CD8-positive, alpha-beta T cell (primary cell): ENCODE measurements at regions of chr1 and their contacts with region 1.

Region 1: DNA sequence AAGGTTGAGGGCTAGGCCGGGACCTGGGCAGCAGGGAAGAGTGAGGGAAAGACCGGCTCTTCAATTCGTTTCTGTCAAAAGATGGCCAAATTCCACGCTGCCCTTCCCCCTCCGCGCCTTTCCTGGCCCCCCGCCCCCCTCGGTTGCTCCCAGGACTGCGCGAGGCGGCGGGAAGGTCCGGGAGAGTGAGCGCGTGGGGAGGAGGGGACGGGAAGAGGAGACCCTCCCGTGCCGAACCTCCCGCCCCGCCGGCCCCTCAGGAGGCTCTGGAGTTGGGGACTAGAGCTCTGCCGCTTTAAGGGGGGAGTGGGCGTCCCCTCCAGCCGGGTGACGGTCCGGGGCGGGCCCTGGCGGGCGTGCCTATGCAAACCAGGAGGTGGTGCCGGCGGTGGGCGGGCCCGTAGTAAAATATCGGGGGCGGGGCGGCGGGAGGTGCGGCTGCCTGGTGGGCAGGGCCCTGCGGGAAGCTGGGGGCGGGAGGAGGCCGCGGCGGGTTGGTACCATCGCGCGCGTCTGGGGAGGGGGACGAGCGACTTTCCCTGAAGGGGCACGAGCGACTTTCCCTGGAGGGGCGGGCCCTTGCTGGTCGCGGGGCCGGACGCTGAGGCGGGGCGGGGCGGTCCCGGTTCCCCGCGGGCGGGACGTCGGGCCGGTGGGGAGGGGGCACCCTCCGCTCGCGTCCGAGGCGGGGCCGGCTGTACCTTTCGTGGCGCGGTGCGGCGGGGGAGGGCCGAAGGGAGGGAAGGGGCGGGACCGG is 58.2 kb downstream of the BCL9 start:
- DNase-seq: peak; percentile 94 to 98 (median 96)
- ATAC-seq: peak; percentile 84
- H3K4me3 ChIP-seq: peak overlapping the region; percentile 75 to 77
- H3K4me3 Mint-ChIP-seq: peak overlapping the region; percentile 88
- H3K27ac ChIP-seq: peak overlapping the region; percentile 24 to 52
- H3K27ac Mint-ChIP-seq: peak overlapping the region; percentile 72
- H3K4me1 ChIP-seq: peaks cover 15% of the 10 kb centered on the region
- H3K4me1 Mint-ChIP-seq: peaks cover 27% of the 10 kb centered on the region
- H3K27me3 ChIP-seq: no peaks in the 10 kb centered on the region
- H3K27me3 Mint-ChIP-seq: no peaks in the 10 kb centered on the region
- CTCF ChIP-seq: no peak

Region 2: GRCh38 chr1:147109041-147109440 is 490.5 kb before region 1 on chr1:
- CTCF ChIA-PET with region 1: no interaction called
- POLR2A ChIA-PET with region 1: no interaction called
- intact Hi-C with region 1: no loop called
- DNase-seq: no peak
- ATAC-seq: no peak
- H3K4me3 ChIP-seq: no peak overlapping the region
- H3K4me3 Mint-ChIP-seq: no peak overlapping the region
- H3K27ac ChIP-seq: no peak overlapping the region
- H3K27ac Mint-ChIP-seq: no peak overlapping the region
- H3K4me1 ChIP-seq: no peaks in the 10 kb centered on the region
- H3K4me1 Mint-ChIP-seq: no peaks in the 10 kb centered on the region
- H3K27me3 ChIP-seq: peaks cover 0 to 4% of the 10 kb centered on the region in 2 experiments
- H3K27me3 Mint-ChIP-seq: peaks cover 16% of the 10 kb centered on the region
- CTCF ChIP-seq: no peak

Region 3: DNA sequence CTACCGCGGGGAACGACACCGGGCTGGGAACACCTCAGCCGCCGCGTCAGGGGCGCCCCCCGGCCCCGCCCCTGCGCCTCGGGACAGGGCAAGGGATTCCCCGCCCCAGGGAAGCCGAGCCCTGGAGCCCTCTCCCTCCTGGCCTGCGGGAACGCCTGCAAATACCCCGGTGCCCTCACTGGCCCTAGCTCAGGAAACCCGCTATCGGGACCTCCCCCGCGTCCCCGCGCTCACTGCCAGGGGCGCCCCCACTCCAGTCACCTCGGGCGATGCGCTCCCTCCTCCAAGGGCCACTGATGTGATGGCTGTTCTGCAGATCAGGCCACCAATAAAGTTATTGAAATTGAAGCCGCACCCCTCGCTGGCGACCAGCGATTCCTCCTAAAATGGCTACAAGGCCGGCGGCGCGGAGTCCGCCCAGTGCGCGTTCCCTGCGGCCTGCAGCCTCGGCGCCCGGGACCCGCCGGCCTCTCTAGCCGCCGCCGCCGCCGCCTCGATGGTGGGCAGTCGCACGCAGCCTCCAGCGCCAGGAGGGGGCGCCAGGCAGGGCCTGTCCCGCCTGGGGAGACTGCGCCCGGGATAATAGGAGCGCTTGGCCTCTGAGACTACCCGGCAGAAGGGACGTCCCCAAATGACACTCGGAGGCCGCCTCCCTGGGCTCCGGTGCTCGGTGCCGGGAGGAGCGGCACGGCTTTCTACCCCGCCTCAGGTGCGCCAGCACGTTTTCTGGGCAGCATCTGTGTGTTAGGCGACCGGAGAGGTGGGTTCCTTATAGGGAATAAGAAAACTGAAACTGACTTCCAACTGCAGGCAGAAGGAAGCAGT is 427.2 kb before region 1 on chr1 and contains the start of gene PRKAB2:
- CTCF ChIA-PET with region 1: no interaction called
- POLR2A ChIA-PET with region 1: no interaction called
- intact Hi-C with region 1: loop called in 1 of 2 experiments (anchors 5 kb)
- DNase-seq: peak; percentile 74 to 94 (median 88)
- ATAC-seq: peak; percentile 79
- H3K4me3 ChIP-seq: peak within 1 kb of the TSS; percentile 85 to 96
- H3K4me3 Mint-ChIP-seq: peak within 1 kb of the TSS; percentile 96
- H3K27ac ChIP-seq: peak within 1 kb of the TSS; percentile 57 to 85
- H3K27ac Mint-ChIP-seq: peak within 1 kb of the TSS; percentile 95
- H3K4me1 ChIP-seq: peaks cover 16% of the 10 kb centered on the region
- H3K4me1 Mint-ChIP-seq: peaks cover 49% of the 10 kb centered on the region
- H3K27me3 ChIP-seq: no peaks in the 10 kb centered on the region
- H3K27me3 Mint-ChIP-seq: no peaks in the 10 kb centered on the region
- CTCF ChIP-seq: peak; percentile 83
- total RNA-seq, gene PRKAB2: 5.2 to 5.8 TPM

Region 4: GRCh38 chr1:147515046-147515869 is 84.3 kb before region 1 on chr1:
- CTCF ChIA-PET with region 1: interaction called, 10 read pairs
- POLR2A ChIA-PET with region 1: no interaction called
- intact Hi-C with region 1: loop called in 1 of 2 experiments (anchors 2 kb)
- DNase-seq: peak in 2 of 9 experiments; percentile 47 to 60
- ATAC-seq: peak; percentile 65
- H3K4me3 ChIP-seq: no peak overlapping the region
- H3K4me3 Mint-ChIP-seq: no peak overlapping the region
- H3K27ac ChIP-seq: no peak overlapping the region
- H3K27ac Mint-ChIP-seq: no peak overlapping the region
- H3K4me1 ChIP-seq: no peaks in the 10 kb centered on the region
- H3K4me1 Mint-ChIP-seq: peaks cover 4% of the 10 kb centered on the region
- H3K27me3 ChIP-seq: no peaks in the 10 kb centered on the region
- H3K27me3 Mint-ChIP-seq: peaks cover 9% of the 10 kb centered on the region
- CTCF ChIP-seq: peak; percentile 33

Region 5: GRCh38 chr1:147579532-147579931 is 20.0 kb before region 1 on chr1:
- CTCF ChIA-PET with region 1: interaction called, 4 read pairs
- POLR2A ChIA-PET with region 1: interaction called, 5 read pairs
- intact Hi-C with region 1: loop called in 1 of 2 experiments (anchors 2 kb)
- DNase-seq: peak in 1 of 9 experiments; percentile 11
- ATAC-seq: peak; percentile 62
- H3K4me3 ChIP-seq: no peak overlapping the region
- H3K4me3 Mint-ChIP-seq: peak overlapping the region; percentile 20
- H3K27ac ChIP-seq: no peak overlapping the region
- H3K27ac Mint-ChIP-seq: peak overlapping the region; percentile 12
- H3K4me1 ChIP-seq: peaks cover 24% of the 10 kb centered on the region
- H3K4me1 Mint-ChIP-seq: peaks cover 26% of the 10 kb centered on the region
- H3K27me3 ChIP-seq: peaks cover 7 to 20% of the 10 kb centered on the region in 2 experiments
- H3K27me3 Mint-ChIP-seq: peaks cover 43% of the 10 kb centered on the region
- CTCF ChIP-seq: no peak

Region 6: DNA sequence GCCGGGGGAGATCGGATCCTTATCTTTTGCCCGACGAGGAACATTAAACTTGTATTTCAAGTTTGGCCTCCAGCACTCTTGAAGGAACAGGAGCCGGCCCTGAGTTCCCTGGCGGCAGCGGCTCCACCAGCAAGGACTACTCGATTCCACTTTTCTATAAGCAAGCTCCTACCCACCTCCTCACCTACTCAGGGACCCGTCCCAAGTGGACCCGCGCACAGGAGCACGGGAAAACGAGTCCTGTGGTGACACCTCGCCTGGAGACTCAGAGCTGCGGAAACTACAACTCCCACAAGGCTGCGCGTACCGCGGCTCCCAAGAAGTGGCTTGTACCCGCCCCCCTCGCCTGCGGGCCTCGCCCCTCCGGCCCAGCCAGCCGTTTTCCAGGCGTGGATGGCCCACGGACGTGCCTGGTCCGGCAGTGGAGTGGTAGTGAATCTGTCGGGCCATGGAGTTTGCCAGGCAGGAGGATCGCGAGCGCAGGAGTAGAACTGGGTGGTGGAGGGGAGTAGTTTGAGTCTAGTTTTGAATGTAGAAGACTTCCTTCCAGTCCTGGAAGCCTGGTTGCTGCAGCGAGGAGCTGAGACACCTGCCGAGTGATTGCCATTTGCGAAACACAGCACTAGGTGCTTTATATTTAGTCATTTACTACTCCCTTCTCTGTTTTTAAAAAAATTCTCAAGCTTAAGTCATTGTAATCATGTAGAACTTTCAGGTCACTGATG is 70.9 kb after region 1 on chr1 and contains the start of gene ACP6:
- CTCF ChIA-PET with region 1: no interaction called
- POLR2A ChIA-PET with region 1: no interaction called
- intact Hi-C with region 1: loop called (anchors 1 to 2 kb)
- DNase-seq: peak; percentile 58 to 92 (median 85)
- ATAC-seq: peak; percentile 94
- H3K4me3 ChIP-seq: peak within 1 kb of the TSS; percentile 84 to 94
- H3K4me3 Mint-ChIP-seq: peak within 1 kb of the TSS; percentile 94
- H3K27ac ChIP-seq: peak within 1 kb of the TSS; percentile 53 to 57
- H3K27ac Mint-ChIP-seq: peak within 1 kb of the TSS; percentile 90
- H3K4me1 ChIP-seq: peaks cover 9% of the 10 kb centered on the region
- H3K4me1 Mint-ChIP-seq: peaks cover 30% of the 10 kb centered on the region
- H3K27me3 ChIP-seq: no peaks in the 10 kb centered on the region
- H3K27me3 Mint-ChIP-seq: no peaks in the 10 kb centered on the region
- CTCF ChIP-seq: no peak
- total RNA-seq, gene ACP6: 4.4 to 4.9 TPM